T-cell (primary cell): ENCODE measurements at regions of chr5 and their contacts with region 1.

Region 1: DNA sequence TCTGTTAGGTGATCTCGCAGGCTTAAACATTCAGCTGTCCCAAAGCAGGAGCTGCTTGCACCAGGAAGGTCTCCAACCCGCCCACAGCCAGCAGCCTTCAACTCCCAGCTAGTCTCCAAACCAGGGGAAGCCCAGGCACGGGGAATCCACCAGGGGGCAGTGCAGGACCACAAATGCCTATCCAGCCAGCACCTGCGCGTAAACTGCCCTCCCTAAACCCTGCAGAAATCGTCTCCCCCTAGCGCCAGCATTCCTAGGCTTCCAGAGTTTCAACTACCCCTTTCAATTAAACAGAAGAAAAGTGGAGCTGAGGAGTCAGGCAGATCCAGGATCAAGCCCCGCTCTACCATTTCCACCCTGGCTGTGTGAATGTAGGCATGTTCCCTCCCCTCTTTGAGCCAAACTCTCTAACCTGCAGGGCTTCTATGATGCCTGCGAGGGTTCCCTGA is 72.0 kb downstream of the HRH2 start:
- DNase-seq: peak; percentile 71 to 95 (median 88)
- ATAC-seq: peak; percentile 85 to 99 (median 90)
- H3K4me3 ChIP-seq: no peak overlapping the region
- H3K4me3 Mint-ChIP-seq: no peak overlapping the region
- H3K27ac ChIP-seq: no peak overlapping the region
- H3K27ac Mint-ChIP-seq: peak overlapping the region in 1 of 2 donors; percentile 45
- H3K4me1 ChIP-seq: peaks cover 0 to 10% of the 10 kb centered on the region in 2 experiments
- H3K4me1 Mint-ChIP-seq: peaks cover 7% of the 10 kb centered on the region in 3 donors
- H3K27me3 ChIP-seq: peaks cover 0 to 32% of the 10 kb centered on the region in 2 experiments
- H3K27me3 Mint-ChIP-seq: peaks cover 8 to 34% of the 10 kb centered on the region in 2 donors

Region 2: GRCh38 chr5:175718401-175719108 is 11.3 kb before region 1 on chr5:
- CTCF ChIA-PET with region 1: interaction called, 8 to 10 read pairs
- POLR2A ChIA-PET with region 1: no interaction called
- DNase-seq: peak in 30 of 35 experiments; percentile 11 to 67 (median 31)
- ATAC-seq: peak in 1 of 4 experiments; percentile 37
- H3K4me3 ChIP-seq: no peak overlapping the region
- H3K4me3 Mint-ChIP-seq: no peak overlapping the region
- H3K27ac ChIP-seq: no peak overlapping the region
- H3K27ac Mint-ChIP-seq: no peak overlapping the region
- H3K4me1 ChIP-seq: no peaks in the 10 kb centered on the region
- H3K4me1 Mint-ChIP-seq: peaks cover 2 to 8% (median 2%) of the 10 kb centered on the region in 3 donors
- H3K27me3 ChIP-seq: no peaks in the 10 kb centered on the region
- H3K27me3 Mint-ChIP-seq: peaks cover 0 to 5% of the 10 kb centered on the region in 2 donors

Region 3: DNA sequence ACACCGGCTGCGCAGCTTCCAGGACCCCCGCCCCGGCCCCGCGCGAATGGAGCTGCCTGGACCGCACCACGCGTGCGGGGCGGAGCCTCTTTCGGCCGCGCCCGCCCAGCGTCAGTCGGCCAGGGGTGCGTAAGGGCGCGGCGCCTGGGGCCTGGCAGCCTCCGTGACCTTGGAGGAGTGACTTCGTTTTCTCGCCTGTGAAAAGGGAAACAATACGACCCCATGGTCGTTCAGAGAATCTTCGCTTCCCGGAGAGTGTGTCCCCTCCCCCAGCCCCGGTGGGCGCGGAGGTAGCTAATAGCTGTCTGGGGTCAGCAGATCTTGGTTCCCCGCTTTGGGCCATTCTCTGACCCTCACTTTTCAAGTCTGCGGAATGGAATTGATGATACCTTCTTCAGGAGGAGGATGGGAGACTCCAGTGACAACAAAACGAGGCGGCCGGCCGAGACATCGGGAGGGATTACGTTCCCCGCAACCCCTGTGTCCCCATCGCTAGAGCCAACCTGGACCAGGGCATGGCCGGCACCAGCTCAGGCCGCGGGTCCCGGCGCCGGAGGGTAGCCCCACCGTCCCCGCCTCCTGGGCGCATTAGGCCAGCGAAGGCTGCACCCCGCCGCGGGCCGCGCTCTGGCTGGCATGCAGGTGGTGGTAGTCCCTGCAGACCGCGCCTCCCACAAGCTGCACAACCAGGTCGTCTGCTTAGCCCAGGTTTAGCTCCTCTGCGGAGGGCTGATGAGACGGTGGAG is 813.7 kb after region 1 on chr5:
- CTCF ChIA-PET with region 1: interaction called in 1 of 2 experiments, 11 read pairs
- POLR2A ChIA-PET with region 1: no interaction called
- DNase-seq: peak; percentile 47 to 85 (median 61)
- ATAC-seq: peak; percentile 70 to 75 (median 74)
- H3K4me3 ChIP-seq: peak overlapping the region; percentile 72 to 78
- H3K4me3 Mint-ChIP-seq: peak overlapping the region; percentile 87 to 91 (median 90)
- H3K27ac ChIP-seq: peak overlapping the region; percentile 91
- H3K27ac Mint-ChIP-seq: peak overlapping the region; percentile 97 to 98
- H3K4me1 ChIP-seq: peaks cover 30 to 77% of the 10 kb centered on the region in 2 experiments
- H3K4me1 Mint-ChIP-seq: peaks cover 65 to 75% (median 70%) of the 10 kb centered on the region in 3 donors
- H3K27me3 ChIP-seq: no peaks in the 10 kb centered on the region
- H3K27me3 Mint-ChIP-seq: no peaks in the 10 kb centered on the region